GM23248 (cell line): ENCODE measurements at regions of chr7 and their contacts with region 1.

Region 1: GRCh38 chr7:70193514-70193913 is 595.2 kb downstream of the AUTS2 start:
- DNase-seq: peak; percentile 58
- H3K4me3 ChIP-seq: no peak overlapping the region
- H3K27ac ChIP-seq: no peak overlapping the region
- H3K4me1 ChIP-seq: peaks cover 17% of the 10 kb centered on the region
- H3K27me3 ChIP-seq: no peaks in the 10 kb centered on the region

Region 2: GRCh38 chr7:70044064-70044463 is 149.4 kb before region 1 on chr7:
- in situ Hi-C with region 1: no loop called
- DNase-seq: no peak
- H3K4me3 ChIP-seq: no peak overlapping the region
- H3K27ac ChIP-seq: no peak overlapping the region
- H3K4me1 ChIP-seq: peaks cover 9% of the 10 kb centered on the region
- H3K27me3 ChIP-seq: no peaks in the 10 kb centered on the region

Region 3: DNA sequence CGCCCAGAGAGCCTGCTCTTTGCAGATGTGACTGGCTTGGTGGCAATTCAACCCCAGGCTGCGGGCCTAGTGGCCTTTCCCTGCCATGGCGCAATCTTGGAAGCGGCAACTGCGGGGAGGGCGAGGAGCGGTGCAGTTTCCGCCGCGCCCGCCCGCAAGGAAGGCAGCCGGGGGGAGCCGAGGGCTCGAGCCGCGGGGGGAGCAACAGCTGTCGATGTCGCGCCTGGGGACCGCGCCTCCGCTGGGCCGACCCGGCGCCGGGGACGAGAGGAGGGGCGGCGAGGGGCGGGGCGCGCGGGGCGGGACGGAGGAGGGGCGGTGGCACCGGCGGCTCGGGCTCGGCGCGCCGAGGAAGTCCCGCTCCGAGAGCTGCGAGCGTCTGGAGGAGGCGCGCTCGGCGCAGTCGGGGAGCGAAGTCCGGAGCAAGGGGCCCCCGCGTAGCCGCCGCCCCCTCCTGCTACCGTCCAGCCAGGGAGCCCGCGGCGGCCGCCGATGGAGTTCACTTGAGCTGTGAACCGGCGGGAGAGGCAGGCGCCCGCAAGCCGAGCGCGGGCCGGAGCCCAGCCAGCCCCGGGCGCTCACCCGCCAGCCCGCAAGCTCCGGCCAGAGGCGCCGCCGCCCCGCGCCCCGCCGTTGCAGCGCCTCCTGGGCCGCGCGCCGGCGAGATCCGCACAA is 500.3 kb after region 1 on chr7:
- in situ Hi-C with region 1: loop called (anchors 25 kb)
- DNase-seq: peak; percentile 73
- H3K4me3 ChIP-seq: peak overlapping the region; percentile 84
- H3K27ac ChIP-seq: no peak overlapping the region
- H3K4me1 ChIP-seq: no peaks in the 10 kb centered on the region; the same call in none of the 2 replicates
- H3K27me3 ChIP-seq: no peaks in the 10 kb centered on the region